ENCODE measurements at regions of chr6 and their contacts with region 1.

Region 1: DNA sequence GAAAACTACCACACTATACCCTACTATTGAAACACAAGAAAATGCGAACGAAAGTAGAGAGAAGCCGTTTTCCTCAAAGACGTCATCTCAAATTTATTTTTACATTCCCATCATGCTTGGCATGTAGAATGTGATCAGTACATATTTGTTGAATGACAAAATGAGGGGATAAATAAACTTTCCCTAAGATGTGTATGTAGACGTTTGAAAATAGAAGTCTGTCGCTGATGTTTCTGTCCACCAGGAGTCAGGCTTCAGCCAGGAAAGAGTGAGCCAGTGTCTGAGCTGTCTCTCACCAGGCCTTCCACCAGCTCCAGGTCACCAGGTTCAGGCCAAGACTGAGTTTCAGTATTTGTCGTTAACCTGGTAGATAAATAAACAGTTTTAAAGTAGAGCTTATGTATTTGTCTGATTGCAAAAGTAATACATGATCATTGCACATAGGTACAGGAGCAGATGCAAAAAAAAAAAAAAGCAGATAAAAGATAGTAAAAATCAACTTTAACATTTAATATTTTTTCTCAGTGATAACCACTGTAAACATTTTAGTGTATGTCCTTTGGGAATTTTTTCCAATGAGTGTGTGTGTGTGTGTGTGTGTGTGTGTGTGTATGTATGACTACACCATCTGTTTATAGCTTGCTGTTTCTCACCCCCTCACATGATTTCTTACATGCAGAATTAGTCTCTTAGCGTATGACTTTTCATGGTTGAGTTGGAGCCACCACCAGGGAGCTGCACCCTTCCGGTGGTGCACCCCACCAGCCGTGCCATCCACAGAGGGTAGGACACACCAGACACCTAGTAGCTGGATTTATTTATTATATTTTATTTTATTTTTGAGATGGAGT is 26.2 kb downstream of the WRNIP1 start:
- DNase-seq: peak; percentile 75
- H3K4me3 ChIP-seq: no peak overlapping the region
- H3K27ac ChIP-seq: no peak overlapping the region
- H3K4me1 ChIP-seq: no peaks in the 10 kb centered on the region
- CTCF ChIP-seq: peak; percentile 90

Region 2: DNA sequence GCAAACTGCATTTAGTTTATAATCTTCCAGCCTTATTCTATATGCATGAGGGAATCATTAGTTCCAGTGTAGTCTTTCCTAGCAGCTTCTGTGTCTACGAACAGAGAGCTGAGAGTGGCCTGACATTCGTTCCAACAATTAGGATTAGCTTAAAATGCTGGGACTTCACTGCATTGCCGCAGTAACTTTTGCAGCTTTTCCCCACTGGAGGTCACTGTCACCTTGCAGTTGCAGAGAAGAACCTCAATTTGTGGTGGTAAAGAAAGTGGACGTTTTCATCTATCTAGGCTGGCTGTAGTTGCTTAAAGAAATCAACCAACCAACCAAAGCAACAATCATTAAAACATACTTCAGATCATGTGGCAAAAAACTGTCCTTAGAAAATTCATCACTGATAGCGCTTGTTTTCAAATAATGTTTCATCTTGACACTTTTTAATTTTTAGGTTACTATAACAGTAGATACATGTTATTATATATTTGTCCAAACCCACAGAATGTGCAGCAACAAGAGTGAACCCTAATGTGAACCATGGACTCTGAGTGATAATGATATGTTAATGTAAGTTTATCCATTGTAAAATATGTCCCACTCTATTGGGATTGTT is 52.9 kb before region 1 on chr6:
- CTCF ChIA-PET with region 1: no interaction called
- POLR2A ChIA-PET with region 1: no interaction called
- intact Hi-C with region 1: no loop called
- DNase-seq: peak; percentile 69
- H3K4me3 ChIP-seq: no peak overlapping the region
- H3K27ac ChIP-seq: no peak overlapping the region
- H3K4me1 ChIP-seq: peaks cover 22% of the 10 kb centered on the region
- CTCF ChIP-seq: peak; percentile 95

Region 3: GRCh38 chr6:2911171-2911570 is 119.8 kb after region 1 on chr6:
- CTCF ChIA-PET with region 1: no interaction called
- POLR2A ChIA-PET with region 1: interaction called, 4 read pairs
- intact Hi-C with region 1: loop called (anchors 5 kb)
- DNase-seq: peak; percentile 87
- H3K4me3 ChIP-seq: peak overlapping the region; percentile 43
- H3K27ac ChIP-seq: peak overlapping the region; percentile 87
- H3K4me1 ChIP-seq: peaks cover 57% of the 10 kb centered on the region
- CTCF ChIP-seq: no peak

Region 4: DNA sequence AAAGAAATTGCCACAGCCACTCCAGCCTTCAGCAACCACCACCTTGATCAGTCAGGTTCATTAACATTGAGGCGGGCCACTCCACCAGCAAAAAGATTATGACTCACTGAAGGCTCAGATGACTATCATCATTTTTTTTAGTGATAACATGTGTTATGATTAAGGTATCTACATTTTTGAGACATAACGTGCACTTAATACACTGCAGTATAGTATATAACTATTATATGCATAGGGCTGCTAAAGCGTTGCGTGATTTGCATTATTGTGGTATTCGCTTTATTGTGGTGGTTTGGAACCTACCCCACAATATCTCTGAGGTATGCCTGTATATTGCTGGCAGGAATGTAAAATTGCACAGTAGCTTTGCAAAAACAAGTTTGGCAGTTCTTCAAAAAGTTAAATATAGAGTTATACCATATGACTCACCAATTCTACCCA is 270.2 kb after region 1 on chr6:
- CTCF ChIA-PET with region 1: no interaction called
- POLR2A ChIA-PET with region 1: no interaction called
- intact Hi-C with region 1: loop called (anchors 5 kb)
- DNase-seq: peak; percentile 17
- H3K4me3 ChIP-seq: peak overlapping the region; percentile 1
- H3K27ac ChIP-seq: no peak overlapping the region
- H3K4me1 ChIP-seq: peaks cover 23% of the 10 kb centered on the region
- CTCF ChIP-seq: no peak